Activated naive CD4-positive, alpha-beta T cell treated with anti-CD3 and anti-CD28 coated beads, Interleukin-2, amount 10 ng/mL, durations not matched to agents 7 days and 5 days (primary cell): ENCODE measurements at regions of chr11 and their contacts with region 1.

Region 1: DNA sequence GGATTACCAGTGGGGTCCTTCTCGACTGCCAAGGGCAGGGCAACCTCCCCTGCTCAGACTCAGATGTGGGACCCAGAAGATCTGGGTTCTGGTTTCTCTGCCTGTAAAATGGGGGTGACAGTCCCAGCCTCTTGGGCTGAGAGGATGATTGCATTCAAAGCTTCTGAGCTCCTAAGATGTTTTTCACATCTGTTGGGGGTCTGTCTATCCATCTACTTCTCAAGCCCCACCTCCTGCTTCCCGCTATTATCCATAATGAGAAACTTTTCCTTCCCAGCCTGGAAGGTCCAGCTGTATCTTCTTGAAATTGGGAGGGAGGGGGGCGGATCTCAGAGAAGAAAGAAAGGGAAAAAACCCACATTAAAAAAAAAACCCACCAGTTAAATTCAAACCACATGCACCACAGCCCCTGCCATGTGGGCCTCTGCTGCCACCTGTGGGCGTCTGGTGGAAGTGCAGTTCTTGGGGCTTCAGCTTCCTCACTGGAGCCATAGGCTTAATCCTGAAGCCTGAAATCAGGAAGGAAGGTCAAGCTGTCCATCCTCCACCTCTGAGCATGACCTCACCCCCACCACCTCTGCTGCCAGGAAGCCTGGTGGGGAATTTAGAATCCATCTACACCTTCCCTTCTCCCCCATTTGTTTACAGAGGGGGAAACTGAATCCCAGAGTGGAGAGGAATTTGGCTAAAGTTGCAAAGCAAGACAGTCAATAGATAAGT is 27.3 kb downstream of the ARHGEF17 start:
- DNase-seq: peak; percentile 83
- H3K4me3 Mint-ChIP-seq: no peak overlapping the region
- H3K27ac Mint-ChIP-seq: no peak overlapping the region
- H3K4me1 Mint-ChIP-seq: no peaks in the 10 kb centered on the region
- H3K27me3 Mint-ChIP-seq: peaks cover 36% of the 10 kb centered on the region

Region 2: DNA sequence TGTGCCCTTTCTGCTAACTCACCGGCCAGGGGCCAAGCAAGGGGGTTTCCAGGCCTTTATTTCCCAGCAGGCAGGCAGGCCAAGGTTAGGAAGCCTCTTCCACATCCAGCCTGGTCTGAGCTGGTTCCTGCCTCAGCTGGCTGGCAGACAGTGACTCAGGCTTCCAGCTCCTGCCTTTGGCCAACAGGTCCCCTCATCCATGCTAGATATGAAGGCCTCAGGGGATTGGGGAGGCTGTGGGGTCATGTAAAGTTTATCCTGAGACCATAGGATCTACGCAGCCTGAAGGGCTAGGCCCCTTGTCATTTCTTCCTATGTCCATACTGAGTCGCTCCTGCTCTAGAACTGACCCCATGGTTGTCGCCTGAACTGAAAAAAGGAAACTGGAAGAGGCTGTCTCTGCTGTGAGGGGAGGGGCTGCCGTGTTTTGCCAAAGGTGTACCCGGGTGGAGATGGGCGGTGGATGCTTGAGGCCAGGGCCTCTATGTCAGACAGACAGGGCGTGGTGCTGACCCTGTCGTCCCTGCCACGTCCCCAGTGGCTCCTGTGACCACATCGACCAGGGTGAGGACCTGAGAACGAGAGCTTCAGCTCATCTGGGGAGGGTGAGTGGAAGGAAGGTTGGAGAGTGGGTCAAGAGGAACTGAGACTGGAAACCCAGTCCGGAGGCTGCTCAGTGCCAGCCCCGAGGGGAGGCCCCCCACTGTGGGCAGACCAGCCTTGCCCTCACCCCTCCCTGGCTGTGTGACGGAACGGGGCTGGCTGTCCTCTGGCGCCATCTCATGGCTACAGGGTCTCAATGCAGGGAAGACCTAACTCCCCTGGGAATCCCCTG is 46.3 kb before region 1 on chr11:
- CTCF ChIA-PET with region 1: interaction called, 38 read pairs
- DNase-seq: peak; percentile 66
- H3K4me3 Mint-ChIP-seq: no peak overlapping the region
- H3K27ac Mint-ChIP-seq: no peak overlapping the region
- H3K4me1 Mint-ChIP-seq: peaks cover 16% of the 10 kb centered on the region
- H3K27me3 Mint-ChIP-seq: peaks cover 56% of the 10 kb centered on the region

Region 3: GRCh38 chr11:73307323-73308002 is 27.9 kb before region 1 on chr11:
- CTCF ChIA-PET with region 1: interaction called, 101 read pairs
- DNase-seq: peak; percentile 94
- H3K4me3 Mint-ChIP-seq: peak overlapping the region; percentile 85
- H3K27ac Mint-ChIP-seq: no peak overlapping the region
- H3K4me1 Mint-ChIP-seq: peaks cover 10% of the 10 kb centered on the region
- H3K27me3 Mint-ChIP-seq: peaks cover 94% of the 10 kb centered on the region

Region 4: DNA sequence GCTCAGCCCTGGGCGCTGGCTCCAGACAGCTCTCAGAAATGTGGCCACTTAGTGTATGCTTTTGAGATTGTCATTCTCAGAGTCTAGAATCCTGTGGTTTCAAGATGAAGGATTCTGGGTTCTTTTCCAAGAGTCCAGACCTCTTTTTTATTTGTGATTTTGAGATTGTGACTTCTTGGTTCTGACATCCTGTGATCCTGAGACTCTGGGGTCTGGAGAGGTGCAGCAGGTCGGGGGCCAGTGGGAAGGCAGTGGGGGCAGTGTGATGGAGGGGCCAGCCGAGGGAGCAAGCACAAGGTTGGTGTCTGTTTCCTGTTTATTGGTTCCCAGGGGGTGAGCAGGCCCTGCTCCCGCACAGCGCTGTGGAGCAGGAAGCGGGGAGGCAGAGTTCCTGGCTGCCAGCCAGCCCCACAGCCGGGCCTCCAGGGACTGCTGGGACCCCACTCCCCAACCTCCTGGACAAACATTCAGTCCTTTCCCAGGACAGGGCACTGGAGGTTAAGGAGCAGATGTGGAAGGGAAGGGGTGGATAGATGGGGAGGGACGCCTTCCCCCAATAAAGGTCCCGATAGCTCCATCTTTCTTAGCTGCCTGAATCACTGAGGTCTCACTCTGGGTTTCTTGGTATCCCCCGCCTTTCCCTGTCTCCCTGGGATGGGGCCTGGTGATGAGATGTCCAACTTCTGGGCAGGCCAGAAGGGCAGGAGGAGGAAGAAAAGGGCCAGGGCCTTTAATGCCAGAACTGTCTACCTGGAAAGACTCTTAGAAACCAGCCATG is 13.6 kb before region 1 on chr11:
- CTCF ChIA-PET with region 1: interaction called, 15 read pairs
- DNase-seq: no peak
- H3K4me3 Mint-ChIP-seq: no peak overlapping the region
- H3K27ac Mint-ChIP-seq: no peak overlapping the region
- H3K4me1 Mint-ChIP-seq: peaks cover 2% of the 10 kb centered on the region
- H3K27me3 Mint-ChIP-seq: peaks cover 40% of the 10 kb centered on the region

Region 5: DNA sequence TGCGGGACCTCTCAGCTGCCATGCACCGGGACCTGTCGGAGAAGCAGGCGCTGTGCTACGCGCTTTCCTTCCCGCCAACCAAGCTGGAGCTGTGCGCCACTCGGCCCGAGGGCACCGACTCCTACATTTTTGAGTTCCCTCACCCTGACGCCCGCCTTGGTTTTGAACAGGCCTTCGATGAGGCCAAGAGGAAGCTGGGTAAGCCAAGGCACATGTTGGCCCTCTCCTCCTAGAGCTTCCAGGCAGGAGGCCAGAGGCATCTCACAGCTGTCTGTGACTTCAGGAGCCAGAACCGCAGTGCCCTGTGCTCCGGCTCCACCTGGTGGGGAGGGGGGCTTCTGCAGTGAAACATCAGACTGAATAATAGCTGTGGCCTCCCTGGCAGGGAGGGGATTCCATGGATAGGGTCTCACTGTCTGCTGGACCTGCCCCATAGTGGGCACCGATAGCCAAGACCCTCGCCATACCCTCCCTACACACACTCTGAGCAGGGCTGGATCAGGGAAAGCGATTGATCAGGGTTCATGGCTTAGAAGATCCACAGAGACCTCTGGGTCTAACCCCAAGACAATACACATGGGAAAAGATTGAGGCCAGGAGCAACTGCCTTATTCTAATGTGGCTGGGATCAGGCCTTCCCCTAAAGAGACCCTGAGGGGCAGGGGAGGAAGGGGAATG is 25.1 kb after region 1 on chr11:
- CTCF ChIA-PET with region 1: interaction called, 12 read pairs
- DNase-seq: peak; percentile 60
- H3K4me3 Mint-ChIP-seq: no peak overlapping the region
- H3K27ac Mint-ChIP-seq: no peak overlapping the region
- H3K4me1 Mint-ChIP-seq: peaks cover 2% of the 10 kb centered on the region
- H3K27me3 Mint-ChIP-seq: peaks cover 3% of the 10 kb centered on the region